ENCODE measurements at regions of chr10 and their contacts with region 1.

Region 1: DNA sequence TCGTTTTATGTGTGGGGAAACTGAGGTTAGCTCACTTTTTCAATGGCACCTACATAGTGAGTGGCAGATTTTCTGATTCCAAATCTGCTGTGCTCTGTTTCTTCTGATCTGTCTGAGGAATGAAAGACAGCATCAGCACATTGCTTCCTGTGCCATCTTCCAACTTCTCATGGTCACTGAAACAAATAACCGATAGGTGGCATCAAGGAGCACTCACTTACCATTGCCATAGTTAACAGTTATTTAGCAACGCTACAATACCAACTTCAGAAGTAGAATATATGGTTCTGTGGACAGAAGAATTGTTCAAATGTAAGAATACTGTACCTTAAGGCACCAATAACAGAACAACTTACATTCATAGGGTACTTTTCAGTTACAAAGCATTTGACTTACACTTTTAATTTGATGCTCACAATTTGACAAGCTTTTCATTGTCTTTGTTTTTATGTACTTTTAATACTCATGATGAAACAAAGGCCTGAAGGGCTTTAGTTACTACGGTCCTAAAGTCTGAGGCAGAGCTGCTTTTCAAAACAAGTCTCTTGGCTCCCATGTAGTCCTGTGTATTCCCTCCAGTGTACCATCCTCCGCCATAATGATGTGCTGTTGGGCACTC is 228.9 kb upstream of the TCF7L2 start:
- DNase-seq: no peak
- ATAC-seq: peak; percentile 60 to 71
- H3K4me3 ChIP-seq: no peak overlapping the region
- H3K27ac ChIP-seq: no peak overlapping the region
- H3K4me1 ChIP-seq: no peaks in the 10 kb centered on the region
- H3K27me3 ChIP-seq: no peaks in the 10 kb centered on the region

Region 2: DNA sequence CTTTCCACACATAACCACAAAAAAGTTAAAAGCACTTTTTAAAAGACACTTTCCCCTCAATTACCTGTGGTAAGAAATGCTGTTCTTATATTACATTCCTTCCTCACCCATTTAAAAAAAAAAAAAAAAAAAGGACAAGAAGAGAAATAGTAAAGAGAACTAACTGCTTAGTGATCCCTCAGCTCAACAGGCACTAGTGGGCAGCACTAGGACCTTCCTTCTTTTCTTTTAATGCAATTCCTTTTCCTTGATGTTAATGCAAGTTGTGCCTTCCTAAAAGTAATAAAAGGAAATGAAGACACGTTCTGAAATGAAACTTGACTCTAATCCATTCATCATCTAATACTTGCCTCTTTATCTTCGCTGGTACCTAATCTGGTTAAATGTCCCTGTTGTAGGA is 418.5 kb after region 1 on chr10:
- intact Hi-C with region 1: loop called in 1 of 4 experiments (anchors 10 kb)
- DNase-seq: no peak
- ATAC-seq: no peak
- H3K4me3 ChIP-seq: no peak overlapping the region
- H3K27ac ChIP-seq: no peak overlapping the region
- H3K4me1 ChIP-seq: no peaks in the 10 kb centered on the region
- H3K27me3 ChIP-seq: no peaks in the 10 kb centered on the region

Measured in right cardiac atrium (tissue), 5 donors.